ENCODE measurements at regions of chr1 and their contacts with region 1.

Region 1: DNA sequence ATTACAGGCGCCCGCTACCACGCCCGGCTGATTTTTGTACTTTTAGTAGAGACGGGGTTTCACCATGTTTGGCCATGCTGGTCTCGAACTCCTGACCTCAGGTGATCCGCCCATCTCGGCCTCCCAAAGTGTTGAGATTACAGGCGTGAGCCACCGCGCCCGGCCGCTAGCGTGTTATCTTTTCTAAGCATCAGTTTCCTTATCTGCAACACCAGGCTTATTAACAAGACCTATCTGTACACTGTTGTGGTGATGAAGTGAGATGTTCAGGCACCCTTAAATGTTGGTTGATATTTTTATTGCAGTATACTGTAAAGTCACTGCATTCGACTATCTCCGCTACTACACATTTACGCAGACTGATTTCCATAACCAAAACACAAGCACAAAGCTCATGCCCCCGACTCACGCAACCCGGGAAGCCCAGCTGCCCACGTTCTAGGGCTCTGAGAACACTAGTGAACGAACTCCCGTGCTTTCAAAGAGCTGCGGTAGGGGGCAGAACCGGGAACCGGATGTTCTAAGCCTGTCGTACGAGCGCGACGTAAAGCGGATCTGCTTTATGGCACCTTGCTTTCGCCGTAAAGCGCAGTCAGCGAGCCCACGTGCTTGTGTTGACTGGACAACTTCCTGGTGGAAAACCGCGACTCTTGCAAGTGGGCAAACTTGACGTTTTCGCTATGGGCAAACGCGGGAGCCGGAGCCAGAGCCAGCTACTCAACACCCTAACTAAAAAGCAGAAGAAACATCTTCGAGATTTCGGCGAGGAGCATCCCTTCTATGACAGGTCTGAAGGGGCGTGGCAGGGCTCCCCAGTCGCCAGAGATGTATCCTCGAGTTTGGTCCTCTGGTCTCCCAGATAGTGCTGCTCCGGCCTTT is at the start of gene UTP25:
- DNase-seq: peak; percentile 80 to 98
- ATAC-seq: peak; percentile 90 to 93
- H3K4me3 ChIP-seq: peak within 1 kb of the TSS; percentile 75
- H3K27ac ChIP-seq: peak within 1 kb of the TSS; percentile 85 to 90
- H3K4me1 ChIP-seq: peaks cover 33% of the 10 kb centered on the region
- CTCF ChIP-seq: peak; percentile 58
- EP300 ChIP-seq: no peak
- POLR2A ChIP-seq: peak; percentile 67
- RAD21 ChIP-seq: 0 out of 5 replicates have a peak, but pooled peaks of 1 of the 2 experiments have one; percentile 14
- polyA plus RNA-seq, gene UTP25: 16.5 and 16.7 TPM in 2 replicates

Region 2: GRCh38 chr1:209787551-209787950 is 40.1 kb before region 1 on chr1:
- CTCF ChIA-PET with region 1: interaction called, 18 read pairs
- POLR2A ChIA-PET with region 1: interaction called, 9 read pairs
- DNase-seq: peak in 1 of 2 experiments; percentile 10
- ATAC-seq: no peak
- H3K4me3 ChIP-seq: no peak overlapping the region
- H3K27ac ChIP-seq: no peak overlapping the region
- H3K4me1 ChIP-seq: peaks cover 17% of the 10 kb centered on the region; the same call in 2 of the 3 replicates
- CTCF ChIP-seq: no peak
- EP300 ChIP-seq: no peak
- POLR2A ChIP-seq: no peak
- RAD21 ChIP-seq: no peak

Region 3: GRCh38 chr1:209805875-209806760 is 21.5 kb before region 1 on chr1 and contains the start of gene IRF6:
- CTCF ChIA-PET with region 1: interaction called, 62 read pairs
- POLR2A ChIA-PET with region 1: interaction called, 6 read pairs
- DNase-seq: peak; percentile 33 to 48
- ATAC-seq: peak; percentile 54 to 83; a peak in 4 of 6 replicates
- H3K4me3 ChIP-seq: peak within 1 kb of the TSS; percentile 32; the same call in 2 of the 3 replicates
- H3K27ac ChIP-seq: no peak within 1 kb of the TSS
- H3K4me1 ChIP-seq: peaks cover 10% of the 10 kb centered on the region
- CTCF ChIP-seq: no peak
- EP300 ChIP-seq: no peak
- POLR2A ChIP-seq: no peak
- RAD21 ChIP-seq: no peak
- polyA plus RNA-seq, gene IRF6: 0.22 and 0.25 TPM in 2 replicates

Region 4: DNA sequence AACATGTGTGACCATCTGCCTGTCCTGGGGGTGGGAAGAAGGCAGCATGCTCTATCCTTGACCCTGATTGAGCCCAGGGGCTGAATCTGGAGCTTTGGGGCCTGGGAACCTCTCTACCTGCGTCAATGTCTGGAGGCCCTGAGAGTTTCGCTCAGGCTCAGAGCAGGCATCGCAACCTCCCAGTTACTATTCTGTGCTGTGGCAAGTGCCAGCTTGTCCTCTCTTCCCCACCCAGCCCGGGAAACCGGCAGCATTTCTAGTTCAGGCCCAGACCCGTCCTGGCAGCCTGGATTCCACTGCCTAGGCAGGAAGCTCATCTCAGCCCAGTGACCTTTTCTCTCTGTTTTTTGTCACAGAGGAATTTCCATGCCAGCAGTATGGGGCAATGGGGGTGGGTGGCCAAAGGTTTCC is 11.7 kb before region 1 on chr1:
- CTCF ChIA-PET with region 1: interaction called, 114 read pairs
- POLR2A ChIA-PET with region 1: interaction called, 3 read pairs
- DNase-seq: no peak
- ATAC-seq: no peak
- H3K4me3 ChIP-seq: no peak overlapping the region
- H3K27ac ChIP-seq: no peak overlapping the region
- H3K4me1 ChIP-seq: no peaks in the 10 kb centered on the region
- CTCF ChIP-seq: no peak
- EP300 ChIP-seq: no peak
- POLR2A ChIP-seq: no peak
- RAD21 ChIP-seq: no peak

Region 5: DNA sequence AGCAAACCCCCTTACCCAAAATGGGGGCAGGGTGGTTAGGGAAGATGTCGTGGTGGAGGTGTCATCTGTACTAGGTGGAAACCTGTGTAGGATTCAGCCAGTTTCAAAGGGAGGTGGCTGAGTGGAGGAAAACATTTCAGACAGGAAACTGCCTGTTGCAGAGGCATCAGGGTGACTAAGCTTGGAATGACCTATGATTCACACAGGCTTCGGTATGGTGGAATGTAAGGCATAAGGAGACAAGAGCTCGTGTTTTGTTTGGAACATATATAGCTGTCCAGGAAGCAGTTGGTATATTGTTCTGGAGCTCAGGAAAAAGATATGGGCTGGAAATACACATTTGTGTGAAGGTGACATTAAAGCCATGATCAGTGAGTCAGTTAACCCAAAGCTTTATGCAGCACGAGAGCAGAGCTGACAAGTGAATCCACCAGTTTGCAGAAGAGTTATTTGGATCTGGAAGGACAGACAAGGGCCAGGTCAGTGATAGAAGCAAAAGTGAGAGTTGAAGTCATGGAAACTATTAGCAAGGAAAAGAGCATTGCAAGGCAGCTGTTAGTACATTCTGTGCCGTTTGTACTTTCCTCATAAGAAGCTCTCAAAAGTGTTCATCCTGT is 12.4 kb after region 1 on chr1:
- CTCF ChIA-PET with region 1: interaction called, 114 read pairs
- POLR2A ChIA-PET with region 1: interaction called, 14 read pairs
- DNase-seq: peak; percentile 77 to 87
- ATAC-seq: peak; percentile 97
- H3K4me3 ChIP-seq: no peak overlapping the region
- H3K27ac ChIP-seq: peak overlapping the region; percentile 76 to 81
- H3K4me1 ChIP-seq: peaks cover 24% of the 10 kb centered on the region
- CTCF ChIP-seq: no peak
- EP300 ChIP-seq: no peak
- POLR2A ChIP-seq: no peak
- RAD21 ChIP-seq: no peak

Region 6: GRCh38 chr1:209860293-209860881 is 32.8 kb after region 1 on chr1:
- CTCF ChIA-PET with region 1: interaction called, 10 read pairs
- POLR2A ChIA-PET with region 1: no interaction called
- DNase-seq: peak; percentile 81 to 86
- ATAC-seq: peak; percentile 85 to 95
- H3K4me3 ChIP-seq: no peak overlapping the region
- H3K27ac ChIP-seq: no peak overlapping the region
- H3K4me1 ChIP-seq: peaks cover 5% of the 10 kb centered on the region; the same call in 1 of the 3 replicates
- CTCF ChIP-seq: peak; percentile 90
- EP300 ChIP-seq: no peak
- POLR2A ChIP-seq: no peak
- RAD21 ChIP-seq: peak; percentile 74 to 79

Region 7: DNA sequence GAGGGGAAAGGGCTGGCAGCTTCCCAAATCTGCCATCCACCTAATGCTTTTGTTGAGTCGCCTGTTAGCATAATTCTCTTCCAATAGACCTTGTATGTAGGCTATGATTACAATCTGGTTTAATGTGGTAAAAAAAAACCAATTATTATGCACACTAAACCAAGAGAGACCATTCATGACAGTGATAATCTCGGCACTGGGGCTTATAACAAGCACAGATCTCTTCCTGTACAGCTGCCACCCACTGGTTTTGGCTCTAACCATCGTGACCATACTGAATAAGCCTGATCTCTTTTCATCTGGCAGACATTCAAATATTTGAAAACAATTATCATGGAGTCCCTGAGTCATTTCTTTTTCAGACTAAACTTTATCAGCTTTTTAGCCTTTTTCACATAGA is 98.4 kb after region 1 on chr1:
- CTCF ChIA-PET with region 1: no interaction called
- POLR2A ChIA-PET with region 1: no interaction called
- DNase-seq: no peak
- ATAC-seq: no peak
- H3K4me3 ChIP-seq: no peak overlapping the region
- H3K27ac ChIP-seq: no peak overlapping the region
- H3K4me1 ChIP-seq: no peaks in the 10 kb centered on the region
- CTCF ChIP-seq: no peak
- EP300 ChIP-seq: no peak
- POLR2A ChIP-seq: no peak
- RAD21 ChIP-seq: no peak

Region 8: GRCh38 chr1:209989525-209989924 is 161.9 kb after region 1 on chr1:
- CTCF ChIA-PET with region 1: interaction called, 32 read pairs
- POLR2A ChIA-PET with region 1: no interaction called
- DNase-seq: peak; percentile 4 to 9
- ATAC-seq: peak in 1 of 2 experiments; percentile 78; a peak in 3 of 6 replicates
- H3K4me3 ChIP-seq: no peak overlapping the region
- H3K27ac ChIP-seq: no peak overlapping the region
- H3K4me1 ChIP-seq: no peaks in the 10 kb centered on the region
- CTCF ChIP-seq: peak; percentile 32; the same call in 2 of the 3 replicates
- EP300 ChIP-seq: no peak
- POLR2A ChIP-seq: no peak
- RAD21 ChIP-seq: peak; percentile 53 to 78